Naive thymus-derived CD4-positive, alpha-beta T cell (primary cell): ENCODE measurements at regions of chr10 and their contacts with region 1.

Region 1: GRCh38 chr10:122551450-122551849 is 9.1 kb upstream of the DMBT1 start:
- DNase-seq: peak in 3 of 9 donors; percentile 13 to 18 (median 14)
- ATAC-seq: peak; percentile 62
- H3K4me3 ChIP-seq: no peak overlapping the region
- H3K4me3 Mint-ChIP-seq: peak overlapping the region in 6 of 10 donors; percentile 32 to 70 (median 53)
- H3K27ac ChIP-seq: no peak overlapping the region
- H3K27ac Mint-ChIP-seq: peak overlapping the region in 7 of 9 donors; percentile 21 to 80 (median 60)
- H3K4me1 ChIP-seq: peaks cover 9 to 16% of the 10 kb centered on the region in 2 donors
- H3K4me1 Mint-ChIP-seq: peaks cover 2 to 20% (median 16%) of the 10 kb centered on the region in 7 donors
- H3K27me3 ChIP-seq: no peaks in the 10 kb centered on the region
- H3K27me3 Mint-ChIP-seq: peaks cover 0 to 9% (median 0%) of the 10 kb centered on the region in 5 donors

Region 2: GRCh38 chr10:121994390-121994961 is 557.0 kb before region 1 on chr10:
- CTCF ChIA-PET with region 1: no interaction called
- POLR2A ChIA-PET with region 1: no interaction called
- intact Hi-C with region 1: no loop called
- DNase-seq: no peak
- ATAC-seq: no peak
- H3K4me3 ChIP-seq: no peak overlapping the region
- H3K4me3 Mint-ChIP-seq: no peak overlapping the region
- H3K27ac ChIP-seq: no peak overlapping the region
- H3K27ac Mint-ChIP-seq: no peak overlapping the region
- H3K4me1 ChIP-seq: no peaks in the 10 kb centered on the region
- H3K4me1 Mint-ChIP-seq: peaks cover 0 to 4% (median 0%) of the 10 kb centered on the region in 7 donors
- H3K27me3 ChIP-seq: no peaks in the 10 kb centered on the region
- H3K27me3 Mint-ChIP-seq: peaks cover 8 to 41% (median 32%) of the 10 kb centered on the region in 5 donors

Region 3: GRCh38 chr10:122475100-122475499 is 76.3 kb before region 1 on chr10:
- CTCF ChIA-PET with region 1: no interaction called
- POLR2A ChIA-PET with region 1: no interaction called
- intact Hi-C with region 1: no loop called
- DNase-seq: no peak
- ATAC-seq: no peak
- H3K4me3 ChIP-seq: no peak overlapping the region
- H3K4me3 Mint-ChIP-seq: no peak overlapping the region
- H3K27ac ChIP-seq: no peak overlapping the region
- H3K27ac Mint-ChIP-seq: no peak overlapping the region
- H3K4me1 ChIP-seq: no peaks in the 10 kb centered on the region
- H3K4me1 Mint-ChIP-seq: peaks cover 3 to 11% (median 8%) of the 10 kb centered on the region in 7 donors
- H3K27me3 ChIP-seq: no peaks in the 10 kb centered on the region
- H3K27me3 Mint-ChIP-seq: peaks cover 0 to 27% (median 23%) of the 10 kb centered on the region in 5 donors

Region 4: GRCh38 chr10:122515588-122516231 is 35.7 kb before region 1 on chr10:
- CTCF ChIA-PET with region 1: no interaction called
- POLR2A ChIA-PET with region 1: no interaction called
- intact Hi-C with region 1: loop called in 1 of 2 experiments (anchors 5 kb)
- DNase-seq: peak in 4 of 9 donors; percentile 4 to 65 (median 14)
- ATAC-seq: peak; percentile 78
- H3K4me3 ChIP-seq: no peak overlapping the region
- H3K4me3 Mint-ChIP-seq: peak overlapping the region in 7 of 10 donors; percentile 2 to 58 (median 29)
- H3K27ac ChIP-seq: no peak overlapping the region
- H3K27ac Mint-ChIP-seq: peak overlapping the region in 1 of 9 donors; percentile 54
- H3K4me1 ChIP-seq: peaks cover 4 to 39% of the 10 kb centered on the region in 2 donors
- H3K4me1 Mint-ChIP-seq: peaks cover 10 to 27% (median 20%) of the 10 kb centered on the region in 7 donors
- H3K27me3 ChIP-seq: no peaks in the 10 kb centered on the region
- H3K27me3 Mint-ChIP-seq: peaks cover 0 to 2% (median 0%) of the 10 kb centered on the region in 5 donors